OCI-LY7 (cell line): ENCODE measurements at regions of chr10 and their contacts with region 1.

Region 1: DNA sequence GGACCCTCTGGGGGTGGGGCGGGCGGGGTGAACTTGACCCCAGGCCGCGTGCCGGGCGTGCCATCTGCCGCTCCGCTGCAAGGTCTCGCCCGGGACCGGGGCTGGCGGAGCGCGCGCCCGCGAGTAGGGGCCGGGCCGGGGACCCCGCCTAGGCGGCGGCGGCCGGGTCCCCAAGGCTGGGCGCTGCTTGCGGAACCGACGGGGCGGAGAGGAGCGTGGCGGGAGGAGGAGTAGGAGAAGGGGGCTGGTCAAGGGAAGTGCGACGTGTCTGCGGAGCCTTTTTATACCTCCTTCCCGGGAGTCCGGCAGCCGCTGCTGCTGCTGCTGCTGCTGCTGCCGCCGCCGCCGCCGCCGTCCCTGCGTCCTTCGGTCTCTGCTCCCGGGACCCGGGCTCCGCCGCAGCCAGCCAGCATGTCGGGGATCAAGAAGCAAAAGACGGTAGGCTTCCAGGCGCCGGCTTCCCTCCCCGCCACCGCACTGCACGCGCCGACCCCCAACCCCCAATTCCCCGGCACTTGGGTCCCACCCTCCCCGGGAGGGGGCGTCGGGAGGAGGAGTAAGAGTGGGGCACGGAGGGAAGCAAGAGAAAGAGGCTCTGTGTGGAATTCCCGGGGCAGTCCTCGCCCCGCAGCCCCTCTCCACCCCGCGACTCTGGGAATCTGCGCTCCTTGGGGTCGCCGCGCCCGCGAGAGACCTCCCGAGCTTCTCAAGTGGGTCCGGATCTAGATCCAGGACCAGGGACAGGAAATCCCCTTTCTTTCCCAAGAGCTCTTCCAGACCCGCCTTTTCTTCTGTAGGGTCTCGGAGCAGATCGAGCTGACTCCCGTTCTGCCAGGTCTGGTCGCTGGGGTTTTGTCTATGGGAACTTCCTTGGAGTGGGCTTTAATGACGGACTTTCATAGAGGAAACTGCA is at the start of gene PAPSS2:
- DNase-seq: no peak
- H3K4me3 ChIP-seq: peak within 1 kb of the TSS; percentile 34
- H3K27ac ChIP-seq: no peak within 1 kb of the TSS
- H3K4me1 ChIP-seq: no peaks in the 10 kb centered on the region
- CTCF ChIP-seq: no peak
- total RNA-seq, gene PAPSS2: 0.03 TPM in 1 of 2 replicates, not detected in the other

Region 2: GRCh38 chr10:86678999-86679792 is 980.6 kb before region 1 on chr10:
- CTCF ChIA-PET with region 1: interaction called, 11 read pairs
- POLR2A ChIA-PET with region 1: no interaction called
- intact Hi-C with region 1: no loop called
- DNase-seq: no peak
- H3K4me3 ChIP-seq: no peak overlapping the region
- H3K27ac ChIP-seq: no peak overlapping the region
- H3K4me1 ChIP-seq: no peaks in the 10 kb centered on the region
- CTCF ChIP-seq: no peak

Region 3: DNA sequence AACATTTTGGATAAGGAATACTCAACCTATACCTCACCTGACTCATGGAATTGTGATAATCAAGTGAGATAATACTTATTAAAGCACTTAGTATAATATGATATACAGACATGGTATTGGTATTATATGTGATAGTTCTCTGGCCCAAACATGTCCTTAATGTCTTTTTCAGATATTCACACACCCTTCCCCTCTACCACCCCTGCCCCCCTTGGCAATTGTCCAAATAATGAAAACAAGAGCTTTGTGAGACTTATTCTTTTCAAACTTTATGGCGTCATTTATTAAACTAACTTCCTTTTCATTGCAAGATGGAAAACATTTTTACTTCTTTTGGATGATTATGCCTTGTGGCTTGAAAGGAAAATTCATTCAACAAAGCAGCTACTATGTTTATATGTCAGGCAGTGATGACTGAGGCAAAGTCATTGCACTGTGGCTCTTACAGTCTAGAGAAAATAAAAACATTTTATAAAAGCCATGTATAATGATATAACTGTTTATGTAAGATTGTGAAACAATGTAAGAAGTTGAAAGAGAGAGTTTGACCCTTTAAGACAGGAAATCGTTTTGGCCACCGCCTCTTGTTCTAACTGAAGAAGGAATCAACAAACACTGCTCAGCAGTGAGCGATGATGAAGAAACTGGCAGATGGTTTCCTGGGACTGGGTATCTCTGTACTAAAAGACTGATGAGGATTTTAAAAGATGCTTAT is 127.8 kb before region 1 on chr10:
- CTCF ChIA-PET with region 1: no interaction called
- POLR2A ChIA-PET with region 1: no interaction called
- intact Hi-C with region 1: loop called (anchors 10 kb)
- DNase-seq: no peak
- H3K4me3 ChIP-seq: no peak overlapping the region
- H3K27ac ChIP-seq: no peak overlapping the region
- H3K4me1 ChIP-seq: no peaks in the 10 kb centered on the region
- CTCF ChIP-seq: no peak

Region 4: GRCh38 chr10:87691506-87692070 is 31.8 kb after region 1 on chr10:
- CTCF ChIA-PET with region 1: no interaction called
- POLR2A ChIA-PET with region 1: no interaction called
- intact Hi-C with region 1: no loop called
- DNase-seq: no peak
- H3K4me3 ChIP-seq: no peak overlapping the region
- H3K27ac ChIP-seq: no peak overlapping the region
- H3K4me1 ChIP-seq: no peaks in the 10 kb centered on the region
- CTCF ChIP-seq: no peak

Region 5: DNA sequence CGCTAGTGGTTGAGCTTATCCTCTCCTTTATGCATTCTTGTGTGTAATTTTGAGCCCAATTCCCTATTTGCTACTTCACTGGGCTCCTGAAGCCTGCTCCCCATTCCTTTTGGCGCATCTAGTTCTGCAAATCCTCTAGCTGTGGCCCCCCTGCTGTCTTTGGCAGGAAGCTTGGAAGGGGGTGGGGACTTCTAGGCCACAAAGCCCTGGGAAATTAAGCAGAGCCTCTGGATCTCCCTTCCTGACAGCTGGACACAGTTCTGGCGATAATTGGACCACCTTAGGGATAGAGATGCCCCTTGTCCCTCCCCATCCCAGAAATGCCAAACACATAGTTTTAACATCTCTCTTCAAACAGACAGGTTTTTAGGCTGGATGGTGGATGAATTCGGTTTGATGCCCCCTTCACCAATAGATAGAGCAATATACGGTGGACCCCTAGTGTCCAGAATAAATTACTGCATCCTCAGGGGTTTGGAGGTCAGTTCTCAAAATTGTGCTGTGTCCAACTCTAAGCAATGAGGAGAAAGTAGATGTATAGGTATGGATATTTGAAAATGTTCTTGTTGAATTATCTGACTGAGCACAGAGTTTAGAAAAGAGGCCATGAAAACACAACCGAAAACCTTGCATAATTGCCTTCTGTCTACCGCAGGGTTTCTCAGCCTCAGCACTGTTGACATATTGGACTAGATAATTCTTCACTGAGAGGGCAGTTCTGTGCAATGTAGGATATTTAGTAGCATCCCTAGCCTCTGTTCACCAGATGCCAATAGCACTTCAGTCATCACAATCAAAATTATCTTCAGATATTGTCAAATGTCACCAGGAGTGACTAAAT is 75.4 kb after region 1 on chr10:
- CTCF ChIA-PET with region 1: no interaction called
- POLR2A ChIA-PET with region 1: interaction called, 3 read pairs
- intact Hi-C with region 1: loop called (anchors 1 kb)
- DNase-seq: peak; percentile 61
- H3K4me3 ChIP-seq: no peak overlapping the region
- H3K27ac ChIP-seq: no peak overlapping the region
- H3K4me1 ChIP-seq: no peaks in the 10 kb centered on the region
- CTCF ChIP-seq: peak; percentile 92